Activated naive CD4-positive, alpha-beta T cell treated with anti-CD3 and anti-CD28 coated beads for 36 hours (primary cell): ENCODE measurements at regions of chrX and their contacts with region 1.

Region 1: GRCh38 chrX:32673193-32673592 is 538.2 kb downstream of the DMD start:
- DNase-seq: no peak
- H3K4me3 Mint-ChIP-seq: no peak overlapping the region
- H3K27ac Mint-ChIP-seq: no peak overlapping the region
- H3K4me1 Mint-ChIP-seq: no peaks in the 10 kb centered on the region
- H3K27me3 Mint-ChIP-seq: no peaks in the 10 kb centered on the region

Region 2: DNA sequence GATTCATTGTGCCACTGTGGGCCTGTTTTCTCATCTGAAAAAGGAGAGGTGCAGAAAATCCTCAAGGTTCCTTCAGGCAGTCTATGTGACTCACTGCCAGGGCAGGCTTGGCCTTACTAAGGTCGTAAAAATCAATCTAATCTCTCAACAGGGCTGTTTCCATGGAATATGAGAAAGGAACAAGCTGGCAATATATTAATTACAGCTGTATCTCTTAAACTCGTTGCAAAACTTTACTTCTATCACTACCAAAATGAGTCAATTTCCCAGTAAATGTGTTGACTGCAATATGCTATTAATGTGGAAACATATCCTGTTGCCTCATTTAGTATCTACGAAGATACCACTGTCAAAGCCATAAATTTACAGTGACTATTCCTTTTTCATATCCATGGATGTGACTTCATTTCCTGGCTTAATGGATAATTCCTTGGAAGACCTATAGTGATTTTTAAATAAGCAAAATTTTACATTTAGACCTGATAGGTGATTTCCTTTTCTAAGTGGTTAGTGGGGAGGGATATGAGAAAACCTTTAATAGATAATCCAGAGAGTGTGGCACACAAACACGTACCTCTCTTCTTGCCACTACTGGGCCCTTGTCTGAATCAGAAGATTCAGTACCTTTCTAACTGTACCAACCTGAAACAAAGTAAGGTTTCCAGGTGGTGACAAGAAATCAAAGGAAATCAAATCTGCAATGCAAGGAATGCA is 1474.0 kb before region 1 on chrX:
- CTCF ChIA-PET with region 1: no interaction called
- intact Hi-C with region 1: no loop called
- DNase-seq: no peak
- H3K4me3 Mint-ChIP-seq: no peak overlapping the region
- H3K27ac Mint-ChIP-seq: no peak overlapping the region
- H3K4me1 Mint-ChIP-seq: no peaks in the 10 kb centered on the region
- H3K27me3 Mint-ChIP-seq: no peaks in the 10 kb centered on the region

Region 3: GRCh38 chrX:32408389-32408788 is 264.8 kb before region 1 on chrX:
- CTCF ChIA-PET with region 1: no interaction called
- intact Hi-C with region 1: loop called (anchors 5 kb)
- DNase-seq: peak; percentile 15
- H3K4me3 Mint-ChIP-seq: no peak overlapping the region
- H3K27ac Mint-ChIP-seq: no peak overlapping the region
- H3K4me1 Mint-ChIP-seq: no peaks in the 10 kb centered on the region
- H3K27me3 Mint-ChIP-seq: no peaks in the 10 kb centered on the region

Region 4: DNA sequence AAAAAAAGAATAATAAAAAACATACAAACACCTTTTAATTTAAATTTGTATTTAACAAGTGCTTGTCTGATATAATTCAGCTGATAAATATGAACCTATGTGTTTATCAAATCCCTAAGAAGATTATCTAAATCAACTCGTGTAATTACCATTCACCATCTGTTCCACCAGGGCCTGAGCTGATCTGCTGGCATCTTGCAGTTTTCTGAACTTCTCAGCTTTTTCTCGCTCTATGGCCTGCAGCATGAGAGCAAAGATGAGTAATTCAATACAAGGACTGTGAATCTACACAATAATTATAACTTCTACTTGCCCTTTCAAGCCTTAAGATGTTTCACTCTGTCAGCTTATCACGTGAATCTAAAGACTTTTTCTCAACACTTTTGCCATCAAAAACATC is 171.6 kb before region 1 on chrX:
- CTCF ChIA-PET with region 1: no interaction called
- intact Hi-C with region 1: no loop called
- DNase-seq: no peak
- H3K4me3 Mint-ChIP-seq: no peak overlapping the region
- H3K27ac Mint-ChIP-seq: no peak overlapping the region
- H3K4me1 Mint-ChIP-seq: no peaks in the 10 kb centered on the region
- H3K27me3 Mint-ChIP-seq: no peaks in the 10 kb centered on the region